ENCODE measurements at regions of chr11 and their contacts with region 1.

Region 1: DNA sequence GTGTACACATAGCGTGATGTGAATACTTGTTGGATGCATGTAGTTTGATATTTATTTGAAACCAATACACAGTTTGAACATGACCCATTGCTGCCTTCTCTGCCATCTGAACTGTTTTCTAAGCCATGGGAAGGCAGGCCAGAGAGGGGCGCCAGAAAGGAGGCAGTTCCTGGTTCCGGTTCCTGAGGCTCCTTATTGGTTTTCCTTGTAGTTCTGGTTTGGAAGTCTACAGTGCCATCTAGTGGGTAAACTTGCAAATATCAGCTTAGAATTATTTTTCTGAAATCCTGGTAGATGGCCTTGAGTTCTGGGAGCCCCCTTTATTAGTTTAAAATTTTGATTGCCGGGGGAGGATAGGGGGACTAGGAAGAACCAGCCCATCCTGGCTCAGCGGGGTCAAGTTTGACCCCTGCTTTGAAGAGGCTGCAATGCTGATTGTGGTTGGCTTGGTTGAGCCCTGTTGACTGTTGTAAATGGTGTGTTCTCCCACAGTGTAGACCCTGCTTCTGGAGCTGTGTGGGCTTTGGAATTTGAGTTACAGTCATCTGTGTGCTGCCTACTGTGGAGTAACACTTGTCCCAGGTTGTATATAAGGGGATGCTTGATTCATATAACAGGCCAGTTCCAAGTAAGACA is 48.4 kb downstream of the GRAMD1B start:
- DNase-seq: peak; percentile 43 to 88
- H3K4me3 ChIP-seq: no peak overlapping the region
- H3K27ac ChIP-seq: no peak overlapping the region
- H3K4me1 ChIP-seq: peaks cover 0 to 24% (median 8%) of the 10 kb centered on the region in 4 donors
- H3K27me3 ChIP-seq: peaks cover 0 to 5% (median 4%) of the 10 kb centered on the region in 3 donors
- CTCF ChIP-seq: peak in 4 of 7 experiments; percentile 47 to 71 (median 64)
- EP300 ChIP-seq: no peak
- POLR2A ChIP-seq: no peak

Region 2: DNA sequence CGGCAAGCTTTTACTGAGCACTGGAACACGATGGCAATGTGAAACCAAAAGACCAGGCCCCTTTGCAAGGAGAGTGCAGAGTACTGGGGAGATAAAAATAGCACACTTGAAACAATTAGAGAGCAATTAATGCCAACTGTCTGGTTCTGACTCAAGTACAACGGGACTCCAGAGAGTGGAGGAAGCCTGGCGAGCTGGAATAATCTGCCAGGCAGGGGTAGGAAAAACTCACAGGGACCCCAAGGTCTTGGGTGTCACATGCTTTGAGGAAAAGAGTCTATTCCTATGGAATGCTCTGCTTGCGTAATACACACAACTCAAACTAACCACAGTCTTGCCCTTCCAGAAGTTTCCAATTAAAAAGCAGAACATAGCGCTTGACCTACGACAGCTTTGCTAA is 170.4 kb before region 1 on chr11:
- intact Hi-C with region 1: loop called (anchors 5 kb)
- DNase-seq: peak in 1 of 2 donors; percentile 42
- H3K4me3 ChIP-seq: no peak overlapping the region
- H3K27ac ChIP-seq: no peak overlapping the region
- H3K4me1 ChIP-seq: no peaks in the 10 kb centered on the region
- H3K27me3 ChIP-seq: peaks cover 0 to 18% (median 3%) of the 10 kb centered on the region in 3 donors
- CTCF ChIP-seq: no peak
- EP300 ChIP-seq: no peak
- POLR2A ChIP-seq: no peak

Region 3: DNA sequence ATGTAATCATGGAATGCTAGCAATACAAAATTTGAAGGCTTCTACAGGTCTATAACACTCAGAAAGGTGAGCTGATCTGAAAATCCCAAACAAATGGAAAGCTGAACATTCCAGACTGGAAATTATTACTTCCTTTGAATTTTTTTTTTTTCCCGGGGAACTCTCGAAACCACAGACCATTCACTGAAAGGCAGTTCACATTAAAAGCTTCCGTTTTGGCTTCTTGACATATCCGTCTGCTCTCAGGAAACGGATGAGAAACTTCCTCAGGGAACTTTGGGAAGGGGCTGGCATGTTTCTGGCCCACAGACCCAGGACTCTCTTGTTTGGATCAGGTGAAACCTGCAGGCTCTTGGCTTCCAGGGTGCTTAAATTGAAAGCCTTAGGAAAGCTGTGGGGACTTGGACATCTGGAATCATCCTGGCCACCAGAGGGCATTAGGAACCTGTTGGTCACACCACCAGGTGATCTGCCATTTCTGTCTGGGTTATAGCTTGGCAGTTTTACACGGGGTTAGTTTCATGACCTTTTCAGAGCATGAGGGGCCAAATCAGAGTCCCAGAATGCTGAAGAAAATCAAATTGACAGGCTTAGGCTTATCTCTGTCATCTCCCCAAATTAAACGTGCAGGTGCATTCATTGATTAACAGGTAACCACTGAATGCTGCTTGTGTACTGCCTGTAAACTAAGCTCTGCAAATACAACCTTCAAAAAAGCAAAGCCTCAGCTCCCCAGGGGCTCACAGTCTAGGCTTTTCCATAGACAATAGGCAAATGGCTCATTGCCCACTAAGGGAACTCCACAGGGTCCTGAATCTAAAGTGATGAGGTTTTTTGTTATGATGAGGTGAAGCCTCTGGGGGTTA is 71.1 kb before region 1 on chr11:
- intact Hi-C with region 1: loop called (anchors 5 kb)
- DNase-seq: peak; percentile 73 to 88
- H3K4me3 ChIP-seq: no peak overlapping the region
- H3K27ac ChIP-seq: no peak overlapping the region
- H3K4me1 ChIP-seq: peaks cover 0 to 25% (median 13%) of the 10 kb centered on the region in 4 donors
- H3K27me3 ChIP-seq: peaks cover 0 to 14% (median 6%) of the 10 kb centered on the region in 3 donors
- CTCF ChIP-seq: peak in 5 of 7 experiments; percentile 24 to 60 (median 53)
- EP300 ChIP-seq: no peak
- POLR2A ChIP-seq: no peak

Region 4: GRCh38 chr11:123696183-123696582 is 217.7 kb after region 1 on chr11:
- intact Hi-C with region 1: no loop called
- DNase-seq: no peak
- H3K4me3 ChIP-seq: no peak overlapping the region
- H3K27ac ChIP-seq: no peak overlapping the region
- H3K4me1 ChIP-seq: no peaks in the 10 kb centered on the region
- H3K27me3 ChIP-seq: peaks cover 0 to 4% (median 0%) of the 10 kb centered on the region in 3 donors
- CTCF ChIP-seq: no peak
- EP300 ChIP-seq: no peak
- POLR2A ChIP-seq: no peak

Region 5: DNA sequence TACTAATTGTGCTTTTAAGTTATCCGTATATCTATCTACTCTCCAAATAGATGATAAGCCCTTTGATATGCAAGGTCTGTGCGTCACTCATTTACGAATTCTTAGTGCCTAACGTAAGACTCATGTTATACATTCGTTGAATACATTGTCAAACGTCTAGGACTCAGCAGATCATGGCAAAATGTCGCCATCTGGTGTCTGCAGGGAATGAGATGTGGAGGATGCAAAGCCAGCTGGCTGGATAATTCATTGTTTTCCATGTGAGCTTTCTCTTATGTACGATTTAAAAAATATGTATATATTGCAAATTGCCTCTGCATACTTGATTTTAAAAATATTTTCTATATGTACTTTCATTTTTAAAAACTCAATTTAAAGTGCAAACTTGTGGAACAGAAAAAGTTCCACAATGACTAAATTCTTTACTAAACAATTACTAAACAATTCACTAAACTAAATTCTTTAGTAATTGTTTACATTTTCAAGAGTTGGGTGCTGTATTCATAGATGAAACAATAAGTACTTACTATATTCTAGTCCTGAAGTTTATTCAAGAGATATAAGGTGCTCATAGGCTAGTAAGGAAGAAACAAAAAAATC is 229.2 kb after region 1 on chr11:
- intact Hi-C with region 1: no loop called
- DNase-seq: peak; percentile 59 to 91
- H3K4me3 ChIP-seq: no peak overlapping the region
- H3K27ac ChIP-seq: no peak overlapping the region
- H3K4me1 ChIP-seq: no peaks in the 10 kb centered on the region
- H3K27me3 ChIP-seq: peaks cover 0 to 23% (median 0%) of the 10 kb centered on the region in 3 donors
- CTCF ChIP-seq: peak in 5 of 7 experiments; percentile 14 to 67 (median 44)
- EP300 ChIP-seq: no peak
- POLR2A ChIP-seq: no peak

Measured in stomach (tissue), 19 donors.